ENCODE measurements at regions of chrX and their contacts with region 1.

Region 1: DNA sequence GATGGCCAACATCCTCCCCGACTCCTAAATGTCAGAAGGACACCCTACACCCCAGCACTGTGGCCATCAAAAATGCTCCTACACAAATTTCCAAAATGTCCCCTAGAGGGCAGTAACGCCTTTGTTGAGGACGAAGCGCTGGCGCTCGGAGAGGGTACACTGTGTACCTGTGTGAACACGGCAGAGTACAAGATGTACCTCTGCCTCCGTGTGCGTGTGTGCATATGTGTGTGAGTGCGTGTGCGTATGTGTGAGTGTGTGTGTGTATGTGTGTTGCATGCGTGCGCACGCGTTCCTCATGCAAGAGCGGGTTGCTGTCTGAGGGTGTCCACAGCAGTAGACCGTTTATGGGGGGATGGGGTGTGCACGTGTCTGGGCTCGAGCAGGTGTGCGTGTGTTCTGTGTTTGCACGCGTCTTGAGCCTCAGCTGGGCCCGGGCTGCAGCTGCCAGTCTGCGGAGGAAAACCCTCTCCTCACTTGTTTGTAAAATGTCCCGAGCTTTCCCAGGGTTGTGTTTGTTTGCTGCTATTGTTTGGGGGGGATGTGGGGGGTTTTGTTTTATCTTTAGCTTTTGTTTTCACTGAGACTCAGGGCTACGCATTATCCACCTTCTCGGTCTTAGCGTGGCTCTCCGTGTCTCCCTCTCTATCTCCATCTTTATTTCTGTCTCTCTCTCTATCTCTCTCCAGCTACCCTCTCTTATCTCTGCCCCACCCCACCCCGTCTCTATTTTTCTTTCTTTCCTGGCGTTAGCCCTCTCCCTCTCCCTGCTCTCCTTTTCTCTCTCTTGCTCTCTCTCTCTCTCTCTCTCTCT is 10.4 kb upstream of the TSPYL2 start:
- DNase-seq: peak; percentile 74 to 84
- ATAC-seq: peak; percentile 94 to 95
- H3K4me3 ChIP-seq: peak overlapping the region; percentile 32 to 44 (median 34)
- H3K27ac ChIP-seq: peak overlapping the region; percentile 82 to 86 (median 84)
- H3K4me1 ChIP-seq: peaks cover 0 to 10% of the 10 kb centered on the region in 2 donors
- H3K27me3 ChIP-seq: no peaks in the 10 kb centered on the region
- CTCF ChIP-seq: peak; percentile 65 to 81 (median 78)
- POLR2A ChIP-seq: peak; percentile 28 to 31

Region 2: GRCh38 chrX:53093748-53094583 is 22.2 kb after region 1 on chrX and contains the start of gene KANTR:
- in situ Hi-C with region 1: no loop called
- intact Hi-C with region 1: loop called (anchors 1 kb)
- DNase-seq: peak; percentile 82 to 91
- ATAC-seq: peak; percentile 94 to 96
- H3K4me3 ChIP-seq: peak within 1 kb of the TSS; percentile 63 to 76 (median 68)
- H3K27ac ChIP-seq: peak within 1 kb of the TSS; percentile 85 to 95 (median 92)
- H3K4me1 ChIP-seq: peaks cover 6 to 7% of the 10 kb centered on the region in 2 donors
- H3K27me3 ChIP-seq: no peaks in the 10 kb centered on the region
- CTCF ChIP-seq: no peak
- POLR2A ChIP-seq: peak; percentile 75 to 83
- total RNA-seq, gene KANTR: 3.0 to 13.0 (median 7.4) TPM

Region 3: GRCh38 chrX:53160297-53160984 is 88.6 kb after region 1 on chrX:
- in situ Hi-C with region 1: no loop called
- intact Hi-C with region 1: no loop called
- DNase-seq: peak; percentile 25 to 37
- ATAC-seq: peak; percentile 37 to 52
- H3K4me3 ChIP-seq: no peak overlapping the region
- H3K27ac ChIP-seq: peak overlapping the region; percentile 73 to 84 (median 78)
- H3K4me1 ChIP-seq: peaks cover 10 to 43% of the 10 kb centered on the region in 2 donors
- H3K27me3 ChIP-seq: no peaks in the 10 kb centered on the region
- CTCF ChIP-seq: no peak
- POLR2A ChIP-seq: no peak

Region 4: GRCh38 chrX:53284684-53285447 is 213.1 kb after region 1 on chrX:
- in situ Hi-C with region 1: no loop called
- intact Hi-C with region 1: loop called (anchors 5 kb)
- DNase-seq: peak; percentile 44 to 72
- ATAC-seq: peak; percentile 16 to 17
- H3K4me3 ChIP-seq: no peak overlapping the region
- H3K27ac ChIP-seq: peak overlapping the region; percentile 12 to 93 (median 88)
- H3K4me1 ChIP-seq: peaks cover 64 to 68% of the 10 kb centered on the region in 2 donors
- H3K27me3 ChIP-seq: no peaks in the 10 kb centered on the region
- CTCF ChIP-seq: peak; percentile 57 to 89 (median 84)
- POLR2A ChIP-seq: no peak

Region 5: DNA sequence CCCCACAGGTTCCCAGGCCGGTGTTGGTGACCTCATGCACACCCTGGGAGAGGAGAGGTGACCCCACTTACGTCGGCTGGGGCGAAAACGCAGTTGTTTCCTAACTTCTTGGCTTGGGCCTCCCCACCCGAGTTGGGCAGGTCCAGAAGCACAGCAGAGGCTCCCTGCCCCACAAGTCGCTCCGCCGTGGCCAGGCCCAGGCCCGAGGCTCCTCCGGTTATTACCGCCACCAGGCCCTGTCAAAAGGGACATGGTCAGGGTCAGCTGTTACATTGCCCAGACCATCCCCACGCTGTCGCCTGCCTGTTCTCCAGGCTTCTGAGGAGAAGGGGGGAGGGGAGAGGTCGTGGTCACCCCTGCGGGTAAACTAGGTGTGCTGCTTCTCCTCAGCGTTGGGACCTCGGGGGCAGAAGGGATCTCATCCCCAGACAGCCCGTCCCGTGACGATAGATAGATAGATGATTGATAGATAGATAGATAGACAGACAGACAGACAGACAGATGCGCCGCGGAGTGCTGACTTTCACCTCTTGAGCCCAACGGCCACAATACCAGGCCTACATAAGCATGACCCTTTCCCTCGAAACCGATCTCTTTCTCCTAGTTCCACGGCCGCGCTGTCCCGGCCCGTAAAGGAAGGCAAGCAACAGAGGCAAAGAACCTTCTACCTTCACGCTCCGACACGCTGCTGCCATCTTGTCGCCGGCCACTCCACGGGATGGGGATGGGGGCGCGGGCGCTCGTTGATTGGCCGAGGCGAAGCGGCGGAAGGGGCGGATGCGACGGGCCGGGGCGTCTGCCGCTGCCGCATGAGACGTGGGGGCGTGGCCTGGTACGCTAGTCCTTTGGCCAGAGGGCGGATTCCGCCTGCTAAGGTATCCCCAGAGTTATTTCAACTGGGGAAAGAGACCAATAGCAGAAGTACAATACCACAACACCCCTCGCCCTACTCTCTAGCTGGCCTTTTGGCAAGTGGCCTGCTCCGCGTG is 362.1 kb after region 1 on chrX and contains the start of gene HSD17B10:
- in situ Hi-C with region 1: no loop called
- intact Hi-C with region 1: loop called (anchors 5 kb)
- DNase-seq: peak; percentile 78 to 87
- ATAC-seq: peak; percentile 87 to 93
- H3K4me3 ChIP-seq: peak within 1 kb of the TSS; percentile 63 to 71 (median 69)
- H3K27ac ChIP-seq: peak within 1 kb of the TSS; percentile 78 to 90 (median 86)
- H3K4me1 ChIP-seq: peaks cover 5 to 9% of the 10 kb centered on the region in 2 donors
- H3K27me3 ChIP-seq: no peaks in the 10 kb centered on the region
- CTCF ChIP-seq: no peak
- POLR2A ChIP-seq: peak; percentile 58 to 83
- total RNA-seq, gene HSD17B10: 62.2 to 106 (median 75.3) TPM